GM10248 (cell line): ENCODE measurements at regions of chr1 and their contacts with region 1.

Region 1: DNA sequence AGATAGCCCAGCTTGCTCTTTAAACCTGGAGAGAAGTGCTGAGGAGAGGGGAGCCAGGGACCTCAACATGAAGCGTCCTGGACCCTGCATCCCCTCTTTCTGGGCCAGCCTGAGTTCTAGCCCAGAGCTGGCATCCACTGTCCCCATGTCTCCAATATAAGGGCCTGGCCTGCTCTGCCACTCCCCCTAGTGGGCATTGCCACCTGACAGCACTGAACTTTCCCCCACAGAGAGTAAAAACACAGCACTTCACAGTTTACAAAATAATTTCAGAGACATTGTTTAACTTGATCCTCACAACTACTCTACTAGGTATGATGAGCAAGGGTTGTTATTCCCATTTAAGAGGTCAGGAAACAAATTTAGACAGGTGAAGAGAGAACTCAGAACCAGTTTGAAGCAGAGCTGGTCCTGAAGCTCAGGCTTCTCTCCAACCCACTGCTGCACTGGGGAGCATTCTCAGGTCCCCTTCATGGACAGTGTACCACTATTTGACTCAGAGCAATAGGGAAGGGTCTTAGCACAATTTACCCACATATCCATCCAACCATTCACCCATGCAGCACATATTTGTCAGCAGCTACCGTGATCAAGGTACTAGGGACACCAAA is 151.2 kb downstream of the DMRTA2 start:
- DNase-seq: peak; percentile 69
- CTCF ChIP-seq: peak; percentile 63

Region 2: GRCh38 chr1:50251702-50252101 is 20.4 kb before region 1 on chr1:
- CTCF ChIA-PET with region 1: interaction called, 10 read pairs
- POLR2A ChIA-PET with region 1: no interaction called
- DNase-seq: peak; percentile 34
- CTCF ChIP-seq: no peak

Region 3: DNA sequence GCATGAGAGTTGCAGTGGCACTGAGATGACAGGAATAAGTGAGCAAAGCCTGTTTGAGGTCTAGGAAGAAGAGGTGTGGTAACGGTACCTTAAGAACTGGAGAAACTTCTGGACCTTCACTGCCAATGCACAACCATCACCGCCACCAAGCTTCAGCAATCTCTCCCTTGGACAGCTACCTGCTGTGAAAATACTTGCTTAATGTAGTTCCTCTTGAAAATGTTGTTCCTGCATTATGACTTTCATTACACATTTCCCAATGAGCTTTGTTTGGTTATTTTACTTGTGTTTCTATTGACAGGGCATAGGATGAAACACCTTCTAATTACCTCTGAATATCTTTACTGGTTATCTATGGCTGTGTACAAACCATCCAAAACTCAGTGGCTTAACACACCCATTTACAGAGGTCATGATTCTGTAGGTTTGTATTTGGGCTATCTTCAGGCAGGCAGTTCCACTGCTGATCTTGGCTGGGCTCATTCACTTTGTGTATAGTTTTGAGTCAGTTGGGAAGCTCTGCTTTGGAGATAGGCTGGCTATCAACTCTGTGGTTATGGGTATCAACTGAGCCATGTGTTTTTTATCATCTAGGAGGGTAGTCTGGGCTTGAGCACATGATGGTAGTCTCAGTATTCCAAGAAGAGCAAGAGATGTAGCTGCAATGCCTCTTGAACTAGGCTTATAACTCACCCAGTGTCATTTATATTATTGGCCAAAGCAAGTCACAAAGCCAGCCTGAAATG is 14.0 kb before region 1 on chr1:
- CTCF ChIA-PET with region 1: interaction called, 17 read pairs
- POLR2A ChIA-PET with region 1: no interaction called
- DNase-seq: no peak
- CTCF ChIP-seq: no peak